ENCODE measurements at regions of chr3 and their contacts with region 1.

Region 1: GRCh38 chr3:141452036-141452435 is 34.8 kb upstream of the RASA2 start:
- DNase-seq: peak; percentile 84
- H3K4me3 ChIP-seq: no peak overlapping the region
- H3K27ac ChIP-seq: no peak overlapping the region
- H3K4me1 ChIP-seq: peaks cover 8% of the 10 kb centered on the region
- CTCF ChIP-seq: peak; percentile 96

Region 2: GRCh38 chr3:141231101-141231935 is 220.7 kb before region 1 on chr3 and contains the start of gene PXYLP1:
- CTCF ChIA-PET with region 1: no interaction called
- POLR2A ChIA-PET with region 1: interaction called, 4 read pairs
- intact Hi-C with region 1: loop called (anchors 5 kb)
- DNase-seq: peak; percentile 85
- H3K4me3 ChIP-seq: peak within 1 kb of the TSS; percentile 73
- H3K27ac ChIP-seq: peak within 1 kb of the TSS; percentile 25
- H3K4me1 ChIP-seq: peaks cover 7% of the 10 kb centered on the region
- CTCF ChIP-seq: peak; percentile 65
- total RNA-seq, gene PXYLP1: 1.9 and 3.6 TPM in 2 replicates

Region 3: DNA sequence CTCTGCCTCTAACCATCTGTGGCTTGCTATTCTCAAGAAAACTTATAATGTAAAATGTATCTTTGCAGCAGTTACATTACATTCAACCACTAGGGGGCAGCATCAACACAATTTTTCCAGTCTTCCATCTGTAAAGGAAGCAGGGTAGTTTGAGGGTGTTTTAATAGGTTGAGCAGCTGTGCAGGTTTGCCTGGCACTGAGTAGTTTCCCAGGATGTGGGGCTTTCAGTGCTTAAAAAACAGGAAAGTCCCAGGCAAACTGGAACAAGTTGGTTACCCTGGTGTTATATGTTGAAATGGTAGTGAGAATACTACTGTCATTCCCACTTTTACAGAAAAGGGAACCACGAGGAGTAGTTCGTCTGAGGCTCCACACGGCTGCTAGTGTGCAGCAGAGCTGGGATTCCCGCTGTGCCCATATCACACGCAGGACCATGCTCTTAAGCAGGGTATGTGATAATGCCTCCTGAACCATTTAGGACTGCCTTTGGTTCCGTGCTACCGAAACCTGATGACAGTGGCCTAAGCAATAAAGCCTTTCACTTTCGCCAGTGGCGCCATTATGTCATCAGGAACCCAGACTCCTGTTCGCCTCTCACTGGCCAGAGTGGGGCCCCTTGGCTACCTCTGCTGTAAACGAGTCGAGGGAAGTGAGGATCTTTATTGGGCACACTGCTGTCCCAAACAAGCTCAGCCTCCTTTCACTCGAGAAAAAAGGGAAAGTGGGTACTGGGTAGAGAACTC is 148.4 kb before region 1 on chr3:
- CTCF ChIA-PET with region 1: interaction called, 12 read pairs
- POLR2A ChIA-PET with region 1: interaction called, 6 read pairs
- intact Hi-C with region 1: loop called (anchors 1 kb)
- DNase-seq: peak; percentile 81
- H3K4me3 ChIP-seq: no peak overlapping the region
- H3K27ac ChIP-seq: no peak overlapping the region
- H3K4me1 ChIP-seq: no peaks in the 10 kb centered on the region
- CTCF ChIP-seq: peak; percentile 92

Region 4: GRCh38 chr3:141311496-141312353 is 140.3 kb before region 1 on chr3:
- CTCF ChIA-PET with region 1: interaction called, 11 read pairs
- POLR2A ChIA-PET with region 1: interaction called, 16 read pairs
- intact Hi-C with region 1: loop called (anchors 1 kb)
- DNase-seq: peak; percentile 98
- H3K4me3 ChIP-seq: peak overlapping the region; percentile 75
- H3K27ac ChIP-seq: no peak overlapping the region
- H3K4me1 ChIP-seq: peaks cover 9% of the 10 kb centered on the region
- CTCF ChIP-seq: peak; percentile 77

Region 5: GRCh38 chr3:141360888-141361598 is 91.0 kb before region 1 on chr3:
- CTCF ChIA-PET with region 1: interaction called, 5 read pairs
- POLR2A ChIA-PET with region 1: interaction called, 4 read pairs
- intact Hi-C with region 1: loop called (anchors 1 kb)
- DNase-seq: peak; percentile 71
- H3K4me3 ChIP-seq: peak overlapping the region; percentile 25
- H3K27ac ChIP-seq: no peak overlapping the region
- H3K4me1 ChIP-seq: peaks cover 5% of the 10 kb centered on the region
- CTCF ChIP-seq: peak; percentile 93

Region 6: GRCh38 chr3:141429131-141430044 is 22.6 kb before region 1 on chr3:
- CTCF ChIA-PET with region 1: no interaction called
- POLR2A ChIA-PET with region 1: no interaction called
- intact Hi-C with region 1: no loop called
- DNase-seq: no peak
- H3K4me3 ChIP-seq: no peak overlapping the region
- H3K27ac ChIP-seq: no peak overlapping the region
- H3K4me1 ChIP-seq: no peaks in the 10 kb centered on the region
- CTCF ChIP-seq: no peak

Measured in OCI-LY7 (cell line).